GM12878 (cell line): ENCODE measurements at regions of chr18 and their contacts with region 1.

Region 1: DNA sequence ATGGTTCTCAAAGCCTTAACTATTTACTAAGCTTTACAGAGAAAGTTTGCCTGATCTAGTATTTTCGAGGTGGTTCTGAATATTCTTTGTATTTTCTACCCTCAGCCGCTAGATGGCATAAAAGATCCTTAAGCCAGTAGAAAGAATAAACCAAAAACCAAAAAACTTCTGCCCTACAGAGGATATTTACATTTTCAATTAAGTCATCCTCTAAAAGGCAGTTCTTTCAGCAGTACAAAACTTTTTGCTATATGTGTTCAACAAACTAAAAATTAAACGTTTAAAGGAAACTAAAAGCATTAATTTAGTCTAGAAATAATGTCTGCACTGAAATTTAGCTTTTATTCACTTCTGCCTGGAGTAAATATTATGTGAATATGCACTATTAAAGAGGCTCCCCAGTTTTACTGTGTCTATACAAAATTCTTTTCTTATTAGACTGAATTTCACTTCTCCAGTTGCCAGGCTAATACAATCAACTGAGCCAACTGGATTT is 297.5 kb downstream of the PIEZO2 start:
- DNase-seq: peak; percentile 61
- ATAC-seq: peak; percentile 80
- H3K4me3 ChIP-seq: no peak overlapping the region
- H3K27ac ChIP-seq: peak overlapping the region; percentile 69
- H3K4me1 ChIP-seq: peaks cover 28% of the 10 kb centered on the region; the same call in 1 of the 2 replicates
- H3K27me3 ChIP-seq: no peaks in the 10 kb centered on the region
- CTCF ChIP-seq: peak; percentile 57 to 83 (median 61); a peak in 5 of 6 replicates
- EP300 ChIP-seq: no peak
- POLR2A ChIP-seq: no peak
- RAD21 ChIP-seq: peak; percentile 96

Region 2: GRCh38 chr18:10702206-10702605 is 149.7 kb before region 1 on chr18:
- CTCF ChIA-PET with region 1: no interaction called
- POLR2A ChIA-PET with region 1: no interaction called
- RAD21 ChIA-PET with region 1: no interaction called
- SMC1A ChIA-PET with region 1: no interaction called
- in situ Hi-C with region 1: no loop called
- intact Hi-C with region 1: no loop called
- DNase-seq: no peak
- ATAC-seq: no peak
- H3K4me3 ChIP-seq: no peak overlapping the region
- H3K27ac ChIP-seq: no peak overlapping the region
- H3K4me1 ChIP-seq: no peaks in the 10 kb centered on the region
- H3K27me3 ChIP-seq: no peaks in the 10 kb centered on the region
- CTCF ChIP-seq: no peak
- EP300 ChIP-seq: no peak
- POLR2A ChIP-seq: no peak
- RAD21 ChIP-seq: no peak

Region 3: DNA sequence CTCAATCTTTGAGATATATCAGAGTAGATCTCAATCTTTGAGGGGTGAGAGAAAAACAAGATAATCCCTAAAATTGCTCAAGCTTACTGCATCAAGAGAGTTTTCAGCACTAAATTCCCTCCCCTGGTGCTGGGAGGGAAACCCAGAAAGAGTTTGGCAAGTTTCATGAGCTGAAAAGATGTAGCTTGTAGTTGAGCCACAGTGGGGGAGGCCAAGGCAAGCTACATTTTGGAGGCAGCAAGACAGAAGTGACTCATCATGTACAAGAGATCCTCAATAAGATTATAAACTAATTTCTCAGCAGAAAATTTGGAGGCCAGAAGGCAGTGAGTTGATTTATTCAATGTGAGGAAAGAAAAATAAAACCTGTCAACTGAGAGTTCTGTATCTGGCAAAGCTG is 10.7 kb before region 1 on chr18:
- CTCF ChIA-PET with region 1: interaction called, 55 read pairs
- POLR2A ChIA-PET with region 1: interaction called, 3 read pairs
- RAD21 ChIA-PET with region 1: interaction called, 60 read pairs
- SMC1A ChIA-PET with region 1: interaction called, 56 read pairs
- in situ Hi-C with region 1: no loop called
- intact Hi-C with region 1: no loop called
- DNase-seq: no peak
- ATAC-seq: no peak
- H3K4me3 ChIP-seq: no peak overlapping the region
- H3K27ac ChIP-seq: peak overlapping the region; percentile 13; the same call in 1 of the 2 replicates
- H3K4me1 ChIP-seq: peaks cover 15% of the 10 kb centered on the region
- H3K27me3 ChIP-seq: no peaks in the 10 kb centered on the region
- CTCF ChIP-seq: no peak
- EP300 ChIP-seq: no peak
- POLR2A ChIP-seq: no peak
- RAD21 ChIP-seq: no peak

Region 4: DNA sequence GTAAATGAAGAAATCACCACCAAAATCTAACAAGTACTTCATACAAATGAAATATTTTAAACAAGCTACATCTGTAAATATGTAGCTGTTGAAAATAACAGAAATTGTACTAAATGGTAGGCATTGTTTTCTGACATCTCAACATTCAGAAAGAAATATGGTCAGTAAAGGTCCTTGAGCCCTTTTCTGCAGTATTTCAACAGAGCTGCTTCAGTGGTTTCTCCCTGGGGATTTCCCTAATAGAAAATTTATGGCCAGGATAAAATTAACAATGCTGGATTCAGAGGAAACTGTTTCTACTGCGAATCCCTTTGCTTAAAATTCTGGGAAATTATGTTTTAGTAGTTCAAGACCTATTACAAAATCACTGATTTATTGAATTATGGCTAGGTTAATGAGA is 40.9 kb after region 1 on chr18:
- CTCF ChIA-PET with region 1: interaction called, 36 read pairs
- POLR2A ChIA-PET with region 1: interaction called, 6 read pairs
- RAD21 ChIA-PET with region 1: interaction called, 19 read pairs
- SMC1A ChIA-PET with region 1: interaction called, 24 read pairs
- in situ Hi-C with region 1: no loop called
- intact Hi-C with region 1: no loop called
- DNase-seq: no peak
- ATAC-seq: peak; percentile 29; the same call in 1 of the 3 replicates
- H3K4me3 ChIP-seq: no peak overlapping the region
- H3K27ac ChIP-seq: no peak overlapping the region
- H3K4me1 ChIP-seq: peaks cover 13% of the 10 kb centered on the region
- H3K27me3 ChIP-seq: no peaks in the 10 kb centered on the region
- CTCF ChIP-seq: no peak
- EP300 ChIP-seq: no peak
- POLR2A ChIP-seq: no peak
- RAD21 ChIP-seq: no peak

Region 5: GRCh38 chr18:10973567-10974203 is 121.8 kb after region 1 on chr18:
- CTCF ChIA-PET with region 1: interaction called, 10 read pairs
- POLR2A ChIA-PET with region 1: no interaction called
- RAD21 ChIA-PET with region 1: interaction called, 5 read pairs
- SMC1A ChIA-PET with region 1: interaction called, 3 read pairs
- in situ Hi-C with region 1: no loop called
- intact Hi-C with region 1: no loop called
- DNase-seq: no peak
- ATAC-seq: peak; percentile 85
- H3K4me3 ChIP-seq: no peak overlapping the region
- H3K27ac ChIP-seq: peak overlapping the region; percentile 62; the same call in 1 of the 2 replicates
- H3K4me1 ChIP-seq: peaks cover 25% of the 10 kb centered on the region
- H3K27me3 ChIP-seq: no peaks in the 10 kb centered on the region
- CTCF ChIP-seq: no peak
- EP300 ChIP-seq: no peak
- POLR2A ChIP-seq: no peak
- RAD21 ChIP-seq: no peak

Region 6: GRCh38 chr18:11136241-11136640 is 284.4 kb after region 1 on chr18:
- CTCF ChIA-PET with region 1: interaction called, 5 read pairs
- POLR2A ChIA-PET with region 1: no interaction called
- RAD21 ChIA-PET with region 1: interaction called, 6 read pairs
- SMC1A ChIA-PET with region 1: interaction called, 12 read pairs
- in situ Hi-C with region 1: loop called (anchors 5 kb)
- intact Hi-C with region 1: no loop called
- DNase-seq: no peak
- ATAC-seq: no peak
- H3K4me3 ChIP-seq: no peak overlapping the region
- H3K27ac ChIP-seq: no peak overlapping the region
- H3K4me1 ChIP-seq: no peaks in the 10 kb centered on the region
- H3K27me3 ChIP-seq: no peaks in the 10 kb centered on the region
- CTCF ChIP-seq: no peak
- EP300 ChIP-seq: no peak
- POLR2A ChIP-seq: no peak
- RAD21 ChIP-seq: no peak